Activated CD8-positive, alpha-beta T cell treated with anti-CD3 and anti-CD28 coated beads, Interleukin-2, amount 10 ng/mL, durations not matched to agents 7 days and 5 days (primary cell): ENCODE measurements at regions of chr19 and their contacts with region 1.

Region 1: DNA sequence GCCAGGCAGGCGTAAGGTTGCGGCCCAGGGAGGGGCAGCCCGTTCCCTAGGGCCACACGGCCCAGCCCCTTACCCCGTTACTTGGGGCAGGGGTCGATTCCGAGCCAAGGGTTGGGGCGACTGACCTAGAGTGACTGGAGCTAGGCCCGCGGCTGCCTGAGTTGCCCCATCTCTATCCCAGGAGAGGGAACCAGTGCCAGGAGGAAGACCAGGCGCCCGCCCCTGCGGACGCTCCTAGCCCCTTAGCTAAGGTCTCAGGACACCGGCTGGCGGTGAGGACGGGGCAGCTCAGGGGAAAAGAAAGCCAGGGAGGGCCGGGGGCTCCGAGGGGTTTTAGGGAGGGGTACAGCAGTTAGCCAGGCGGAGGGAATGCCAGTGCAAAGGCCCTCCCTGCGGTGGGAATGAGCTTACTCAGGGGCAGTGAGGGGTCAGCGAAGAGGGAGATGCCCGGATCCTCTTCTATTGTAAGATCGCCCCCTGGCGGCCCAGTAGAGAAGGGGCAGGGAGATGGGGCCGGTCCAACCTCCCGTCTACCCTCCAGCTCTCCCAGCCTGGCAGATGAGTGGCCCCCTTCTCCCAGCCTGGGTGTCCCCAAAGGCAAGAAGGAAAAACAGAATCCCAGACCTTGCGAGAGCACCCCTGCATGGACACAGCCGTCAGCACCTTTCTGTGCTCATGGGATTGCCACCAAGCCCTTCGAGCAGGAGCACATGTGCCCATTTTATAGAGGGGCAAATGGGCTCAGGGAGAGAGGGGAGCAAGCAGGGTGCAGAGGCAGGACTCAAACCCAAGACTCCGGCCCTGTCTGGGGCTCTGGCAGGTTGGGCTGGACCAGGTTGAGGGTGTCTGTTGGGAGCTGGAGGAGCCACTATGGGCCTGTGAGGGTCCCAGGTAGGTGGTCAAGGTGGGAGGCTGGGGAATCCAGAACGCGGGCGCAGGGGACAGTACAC is 16.3 kb downstream of the CILP2 start:
- DNase-seq: peak; percentile 70
- ATAC-seq: peak; percentile 61
- H3K4me3 Mint-ChIP-seq: no peak overlapping the region
- H3K27ac Mint-ChIP-seq: no peak overlapping the region
- H3K4me1 Mint-ChIP-seq: peaks cover 13% of the 10 kb centered on the region
- H3K27me3 Mint-ChIP-seq: no peaks in the 10 kb centered on the region

Region 2: GRCh38 chr19:19524053-19524452 is 30.3 kb before region 1 on chr19:
- CTCF ChIA-PET with region 1: no interaction called
- POLR2A ChIA-PET with region 1: no interaction called
- DNase-seq: no peak
- ATAC-seq: no peak
- H3K4me3 Mint-ChIP-seq: no peak overlapping the region
- H3K27ac Mint-ChIP-seq: no peak overlapping the region
- H3K4me1 Mint-ChIP-seq: peaks cover 46% of the 10 kb centered on the region
- H3K27me3 Mint-ChIP-seq: no peaks in the 10 kb centered on the region

Region 3: GRCh38 chr19:19568802-19569756 is 14.7 kb after region 1 on chr19:
- CTCF ChIA-PET with region 1: interaction called, 13 read pairs
- POLR2A ChIA-PET with region 1: no interaction called
- DNase-seq: no peak
- ATAC-seq: no peak
- H3K4me3 Mint-ChIP-seq: no peak overlapping the region
- H3K27ac Mint-ChIP-seq: no peak overlapping the region
- H3K4me1 Mint-ChIP-seq: no peaks in the 10 kb centered on the region
- H3K27me3 Mint-ChIP-seq: no peaks in the 10 kb centered on the region

Region 4: GRCh38 chr19:19578252-19578651 is 23.9 kb after region 1 on chr19:
- CTCF ChIA-PET with region 1: interaction called, 15 read pairs
- POLR2A ChIA-PET with region 1: no interaction called
- DNase-seq: no peak
- ATAC-seq: no peak
- H3K4me3 Mint-ChIP-seq: no peak overlapping the region
- H3K27ac Mint-ChIP-seq: no peak overlapping the region
- H3K4me1 Mint-ChIP-seq: peaks cover 35% of the 10 kb centered on the region
- H3K27me3 Mint-ChIP-seq: no peaks in the 10 kb centered on the region

Region 5: DNA sequence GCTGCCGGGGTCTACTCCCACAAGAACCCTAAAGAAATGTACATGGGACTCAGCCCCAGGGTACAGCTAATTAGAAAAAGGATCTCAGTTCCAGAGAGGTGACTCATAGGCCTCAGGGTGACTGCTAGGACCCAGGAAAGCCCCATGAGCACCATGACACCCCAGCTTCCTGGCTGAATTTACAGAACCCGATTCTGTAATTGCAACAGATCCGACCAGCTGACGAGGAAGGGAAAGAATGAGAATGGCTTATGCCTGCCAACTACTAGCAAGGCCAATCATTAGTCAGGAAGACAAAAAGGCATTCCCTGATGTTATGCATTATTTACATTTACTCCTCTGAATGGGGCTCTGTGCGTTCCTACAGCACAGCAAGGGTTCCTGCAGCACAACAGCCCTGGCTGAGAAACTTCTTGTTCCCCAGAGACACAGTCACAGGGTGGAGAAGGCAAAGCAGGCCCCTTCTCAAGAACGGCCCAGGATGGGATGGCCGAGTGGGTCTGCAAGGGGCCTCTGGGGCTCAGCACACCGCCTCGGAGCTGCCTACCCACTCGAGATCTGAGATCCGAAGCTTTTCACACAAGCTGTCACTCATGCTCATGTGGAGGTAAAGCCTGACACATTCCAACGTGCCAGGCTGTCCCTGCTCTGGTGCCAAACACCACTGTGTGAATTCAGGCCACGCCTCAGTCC is 36.9 kb after region 1 on chr19:
- CTCF ChIA-PET with region 1: interaction called, 27 read pairs
- POLR2A ChIA-PET with region 1: no interaction called
- DNase-seq: peak; percentile 67
- ATAC-seq: peak; percentile 62
- H3K4me3 Mint-ChIP-seq: peak overlapping the region; percentile 52
- H3K27ac Mint-ChIP-seq: peak overlapping the region; percentile 79
- H3K4me1 Mint-ChIP-seq: peaks cover 74% of the 10 kb centered on the region
- H3K27me3 Mint-ChIP-seq: no peaks in the 10 kb centered on the region

Region 6: GRCh38 chr19:19606021-19606420 is 51.7 kb after region 1 on chr19:
- CTCF ChIA-PET with region 1: interaction called, 13 read pairs
- POLR2A ChIA-PET with region 1: no interaction called
- DNase-seq: peak; percentile 59
- ATAC-seq: peak; percentile 65
- H3K4me3 Mint-ChIP-seq: peak overlapping the region; percentile 32
- H3K27ac Mint-ChIP-seq: peak overlapping the region; percentile 89
- H3K4me1 Mint-ChIP-seq: peaks cover 68% of the 10 kb centered on the region
- H3K27me3 Mint-ChIP-seq: no peaks in the 10 kb centered on the region

Region 7: GRCh38 chr19:19652456-19653295 is 98.3 kb after region 1 on chr19:
- CTCF ChIA-PET with region 1: no interaction called
- POLR2A ChIA-PET with region 1: no interaction called
- DNase-seq: no peak
- ATAC-seq: no peak
- H3K4me3 Mint-ChIP-seq: no peak overlapping the region
- H3K27ac Mint-ChIP-seq: peak overlapping the region; percentile 21
- H3K4me1 Mint-ChIP-seq: no peaks in the 10 kb centered on the region
- H3K27me3 Mint-ChIP-seq: no peaks in the 10 kb centered on the region